ENCODE measurements at regions of chr9 and their contacts with region 1.

Region 1: GRCh38 chr9:70466976-70467561 is 52.6 kb upstream of the KLF9 start:
- DNase-seq: no peak
- H3K4me3 ChIP-seq: no peak overlapping the region
- H3K27ac ChIP-seq: no peak overlapping the region
- H3K4me1 ChIP-seq: no peaks in the 10 kb centered on the region
- H3K27me3 ChIP-seq: no peaks in the 10 kb centered on the region
- CTCF ChIP-seq: no peak
- POLR2A ChIP-seq: no peak

Region 2: GRCh38 chr9:69412741-69413150 is 1054.3 kb before region 1 on chr9:
- intact Hi-C with region 1: no loop called
- DNase-seq: no peak
- H3K4me3 ChIP-seq: no peak overlapping the region
- H3K27ac ChIP-seq: no peak overlapping the region
- H3K4me1 ChIP-seq: no peaks in the 10 kb centered on the region
- H3K27me3 ChIP-seq: no peaks in the 10 kb centered on the region
- CTCF ChIP-seq: peak in 3 of 4 experiments; percentile 35 to 59 (median 57)
- POLR2A ChIP-seq: no peak

Region 3: GRCh38 chr9:70429899-70430298 is 37.2 kb before region 1 on chr9:
- intact Hi-C with region 1: loop called (anchors 5 kb)
- DNase-seq: no peak
- H3K4me3 ChIP-seq: no peak overlapping the region
- H3K27ac ChIP-seq: no peak overlapping the region
- H3K4me1 ChIP-seq: no peaks in the 10 kb centered on the region
- H3K27me3 ChIP-seq: no peaks in the 10 kb centered on the region
- CTCF ChIP-seq: no peak
- POLR2A ChIP-seq: no peak

Region 4: DNA sequence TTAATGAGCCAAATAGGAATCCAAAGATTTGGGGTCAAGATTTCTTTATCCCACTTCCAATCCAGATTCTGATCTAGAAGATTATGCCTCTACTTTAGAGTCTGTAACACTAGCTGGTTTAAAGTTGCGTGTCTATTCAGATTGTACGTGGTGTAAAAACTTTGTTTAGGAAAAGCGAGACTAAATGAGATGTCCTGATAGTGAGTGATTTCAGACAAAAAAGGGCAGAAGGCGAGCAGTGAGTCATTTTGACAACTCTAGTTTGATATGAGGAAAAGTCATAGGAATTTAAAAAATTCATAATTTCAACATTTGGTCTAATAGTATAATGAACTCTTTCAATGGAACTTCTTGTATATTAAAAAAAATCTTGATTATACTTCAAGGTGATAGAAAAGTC is 67.0 kb after region 1 on chr9:
- intact Hi-C with region 1: no loop called
- DNase-seq: no peak
- H3K4me3 ChIP-seq: no peak overlapping the region
- H3K27ac ChIP-seq: no peak overlapping the region
- H3K4me1 ChIP-seq: no peaks in the 10 kb centered on the region
- H3K27me3 ChIP-seq: no peaks in the 10 kb centered on the region
- CTCF ChIP-seq: no peak
- POLR2A ChIP-seq: no peak